HCT116 (cell line): ENCODE measurements at regions of chr11 and their contacts with region 1.

Region 1: GRCh38 chr11:102733232-102733875 is 8.6 kb upstream of the MMP8 start:
- DNase-seq: peak; percentile 57
- ATAC-seq: peak; percentile 99
- H3K4me3 ChIP-seq: no peak overlapping the region
- H3K27ac ChIP-seq: no peak overlapping the region
- H3K4me1 ChIP-seq: no peaks in the 10 kb centered on the region
- H3K27me3 ChIP-seq: no peaks in the 10 kb centered on the region
- CTCF ChIP-seq: peak; percentile 86 to 95 (median 89)
- POLR2A ChIP-seq: no peak
- RAD21 ChIP-seq: peak; percentile 95

Region 2: GRCh38 chr11:102367364-102367763 is 366.0 kb before region 1 on chr11:
- CTCF ChIA-PET with region 1: no interaction called
- POLR2A ChIA-PET with region 1: no interaction called
- RAD21 ChIA-PET with region 1: no interaction called
- intact Hi-C with region 1: no loop called
- DNase-seq: no peak
- ATAC-seq: peak; percentile 59; the same call in 1 of the 2 replicates
- H3K4me3 ChIP-seq: no peak overlapping the region
- H3K27ac ChIP-seq: no peak overlapping the region
- H3K4me1 ChIP-seq: no peaks in the 10 kb centered on the region
- H3K27me3 ChIP-seq: no peaks in the 10 kb centered on the region
- CTCF ChIP-seq: peak in 2 of 3 experiments; percentile 31 to 44; a peak in 3 of 6 replicates
- POLR2A ChIP-seq: no peak
- RAD21 ChIP-seq: peak; percentile 48; the same call in 1 of the 2 replicates

Region 3: DNA sequence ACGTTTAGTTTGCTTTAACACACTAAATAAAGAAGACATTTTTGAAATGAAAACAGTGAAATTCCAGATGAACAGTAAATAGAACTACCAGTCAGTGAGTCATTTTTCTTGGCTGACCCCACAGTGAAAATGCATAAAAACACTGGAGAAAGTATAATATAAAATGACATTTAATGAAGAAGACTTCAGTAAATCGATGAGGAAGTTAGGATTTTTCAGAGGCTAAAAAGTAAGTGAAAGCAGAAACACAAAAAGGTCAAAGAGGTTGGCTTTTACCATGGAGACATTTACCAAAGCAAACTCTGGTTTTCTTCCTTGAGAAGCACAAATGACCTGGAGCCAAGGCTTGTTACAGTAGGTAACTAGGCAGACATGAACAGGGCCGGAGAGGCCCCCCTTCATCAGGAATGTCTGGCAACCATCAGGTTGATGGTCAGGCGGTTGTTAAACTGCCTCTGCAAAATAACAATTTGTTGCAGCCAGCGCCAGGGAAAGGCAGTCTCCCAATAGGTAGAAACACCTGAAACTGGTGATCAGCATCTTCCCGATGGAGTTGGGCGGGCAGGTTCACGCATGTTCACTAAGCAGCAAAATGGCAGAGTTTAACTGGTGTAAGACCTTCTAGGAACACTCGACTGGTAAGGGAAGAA is 264.1 kb before region 1 on chr11:
- CTCF ChIA-PET with region 1: no interaction called
- POLR2A ChIA-PET with region 1: no interaction called
- RAD21 ChIA-PET with region 1: no interaction called
- intact Hi-C with region 1: no loop called
- DNase-seq: no peak
- ATAC-seq: no peak
- H3K4me3 ChIP-seq: no peak overlapping the region
- H3K27ac ChIP-seq: no peak overlapping the region
- H3K4me1 ChIP-seq: peaks cover 2 to 14% of the 10 kb centered on the region in 2 experiments; a peak in 2 of 4 replicates
- H3K27me3 ChIP-seq: no peaks in the 10 kb centered on the region
- CTCF ChIP-seq: no peak
- POLR2A ChIP-seq: no peak
- RAD21 ChIP-seq: no peak

Region 4: GRCh38 chr11:102620818-102621561 is 112.4 kb before region 1 on chr11:
- CTCF ChIA-PET with region 1: no interaction called
- POLR2A ChIA-PET with region 1: no interaction called
- RAD21 ChIA-PET with region 1: no interaction called
- intact Hi-C with region 1: no loop called
- DNase-seq: no peak
- ATAC-seq: no peak
- H3K4me3 ChIP-seq: no peak overlapping the region
- H3K27ac ChIP-seq: no peak overlapping the region
- H3K4me1 ChIP-seq: peaks cover 0 to 3% of the 10 kb centered on the region in 2 experiments; a peak in 2 of 4 replicates
- H3K27me3 ChIP-seq: no peaks in the 10 kb centered on the region
- CTCF ChIP-seq: no peak
- POLR2A ChIP-seq: no peak
- RAD21 ChIP-seq: no peak

Region 5: DNA sequence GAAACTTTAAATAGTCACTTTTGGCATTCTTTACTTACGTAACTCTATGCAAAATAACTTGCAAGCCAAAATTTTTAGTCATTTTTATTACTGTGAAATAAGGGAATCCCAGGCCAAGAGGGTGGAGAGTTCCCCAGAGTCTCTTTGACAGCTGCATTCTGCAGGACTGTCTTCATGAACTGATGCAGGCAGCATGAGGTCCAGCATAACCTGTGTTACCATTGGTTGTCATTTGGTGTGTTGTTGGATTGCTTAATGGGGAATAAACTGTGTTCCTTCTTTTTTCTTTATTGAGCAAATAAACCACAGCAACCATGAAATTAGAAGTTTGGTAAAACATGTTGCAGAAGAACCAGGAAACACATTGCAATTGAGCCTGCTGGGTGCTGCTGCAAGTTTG is 52.4 kb before region 1 on chr11:
- CTCF ChIA-PET with region 1: no interaction called
- POLR2A ChIA-PET with region 1: no interaction called
- RAD21 ChIA-PET with region 1: no interaction called
- intact Hi-C with region 1: no loop called
- DNase-seq: no peak
- ATAC-seq: no peak
- H3K4me3 ChIP-seq: no peak overlapping the region
- H3K27ac ChIP-seq: no peak overlapping the region
- H3K4me1 ChIP-seq: no peaks in the 10 kb centered on the region
- H3K27me3 ChIP-seq: no peaks in the 10 kb centered on the region
- CTCF ChIP-seq: no peak
- POLR2A ChIP-seq: no peak
- RAD21 ChIP-seq: no peak

Region 6: GRCh38 chr11:102940714-102941588 is 207.6 kb after region 1 on chr11:
- CTCF ChIA-PET with region 1: interaction called, 18 read pairs
- POLR2A ChIA-PET with region 1: no interaction called
- RAD21 ChIA-PET with region 1: no interaction called
- intact Hi-C with region 1: loop called (anchors 1 kb)
- DNase-seq: peak; percentile 70
- ATAC-seq: peak; percentile 94
- H3K4me3 ChIP-seq: no peak overlapping the region
- H3K27ac ChIP-seq: no peak overlapping the region
- H3K4me1 ChIP-seq: peaks cover 0 to 9% of the 10 kb centered on the region in 2 experiments; a peak in 2 of 4 replicates
- H3K27me3 ChIP-seq: no peaks in the 10 kb centered on the region
- CTCF ChIP-seq: peak; percentile 66 to 88 (median 86)
- POLR2A ChIP-seq: no peak
- RAD21 ChIP-seq: peak; percentile 82

Region 7: DNA sequence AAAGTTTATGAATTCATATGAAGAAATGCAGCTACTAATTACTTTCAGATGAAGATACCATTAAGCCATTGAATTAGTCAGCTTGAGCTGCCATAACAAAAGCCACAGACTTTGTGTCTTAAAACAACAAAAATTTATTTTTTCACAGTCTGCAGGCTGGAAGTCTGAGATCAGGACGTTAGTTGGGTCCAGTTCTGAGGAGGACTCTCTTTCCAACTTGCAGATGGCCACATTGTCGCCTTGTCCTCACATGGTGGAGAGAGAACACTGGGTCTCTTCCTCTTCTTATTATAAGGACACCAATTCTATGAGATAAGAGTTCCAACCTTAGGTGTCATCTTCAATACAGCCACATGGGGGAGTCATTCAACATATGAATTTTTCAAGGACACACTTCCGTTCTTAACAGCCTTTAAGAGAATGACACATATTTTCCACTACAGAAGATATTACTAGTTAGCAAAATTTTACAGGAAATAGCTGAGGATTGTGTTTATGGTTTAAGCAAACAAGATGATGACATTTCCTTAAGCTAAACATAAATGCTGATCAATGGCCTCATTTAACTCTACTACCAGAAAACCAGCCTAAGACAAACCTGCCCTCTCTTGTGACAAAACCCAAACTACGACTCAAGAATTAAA is 302.6 kb after region 1 on chr11:
- CTCF ChIA-PET with region 1: no interaction called
- POLR2A ChIA-PET with region 1: no interaction called
- RAD21 ChIA-PET with region 1: no interaction called
- intact Hi-C with region 1: loop called (anchors 1 kb)
- DNase-seq: peak; percentile 84
- ATAC-seq: peak; percentile 96
- H3K4me3 ChIP-seq: no peak overlapping the region
- H3K27ac ChIP-seq: no peak overlapping the region
- H3K4me1 ChIP-seq: peaks cover 0 to 8% of the 10 kb centered on the region in 2 experiments; a peak in 2 of 4 replicates
- H3K27me3 ChIP-seq: no peaks in the 10 kb centered on the region
- CTCF ChIP-seq: peak; percentile 58 to 67 (median 60); a peak in 5 of 6 replicates
- POLR2A ChIP-seq: no peak
- RAD21 ChIP-seq: peak; percentile 58

Region 8: DNA sequence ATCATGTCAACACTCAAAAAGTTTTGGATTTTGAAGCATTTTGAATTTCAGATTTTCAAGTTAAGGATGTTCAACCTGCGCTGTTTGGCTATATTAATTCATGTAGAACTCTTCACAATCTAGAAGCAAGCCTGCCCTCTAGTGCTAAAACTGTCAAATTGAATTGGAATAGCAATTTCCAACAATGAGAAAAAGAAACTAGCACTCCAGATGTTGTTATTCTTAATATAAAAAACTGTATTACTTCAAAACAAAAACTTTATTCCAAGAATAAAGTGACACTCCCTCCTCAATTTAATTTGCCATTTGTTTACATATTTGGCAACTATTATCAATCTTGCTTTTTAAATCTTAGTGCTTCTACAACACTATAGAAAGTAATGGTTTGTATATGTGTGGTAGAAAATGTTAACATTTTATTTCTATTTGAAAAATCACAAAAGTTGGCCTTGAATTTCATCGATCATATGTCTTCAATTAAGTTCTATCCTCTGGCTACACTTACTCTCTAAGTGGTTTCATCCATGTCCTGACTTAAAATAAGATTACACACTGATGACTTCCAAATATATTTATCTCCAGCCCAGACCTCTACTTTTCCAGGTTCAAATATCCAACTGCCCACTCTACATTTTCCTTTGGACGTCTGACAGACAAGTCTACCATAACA is 322.0 kb after region 1 on chr11:
- CTCF ChIA-PET with region 1: interaction called, 3 read pairs
- POLR2A ChIA-PET with region 1: no interaction called
- RAD21 ChIA-PET with region 1: no interaction called
- intact Hi-C with region 1: loop called (anchors 1 kb)
- DNase-seq: peak; percentile 26
- ATAC-seq: peak; percentile 59
- H3K4me3 ChIP-seq: no peak overlapping the region
- H3K27ac ChIP-seq: no peak overlapping the region
- H3K4me1 ChIP-seq: no peaks in the 10 kb centered on the region
- H3K27me3 ChIP-seq: no peaks in the 10 kb centered on the region
- CTCF ChIP-seq: peak; percentile 45 to 71 (median 55); a peak in 5 of 6 replicates
- POLR2A ChIP-seq: no peak
- RAD21 ChIP-seq: peak; percentile 68